PC-9 (cell line): ENCODE measurements at regions of chr7 and their contacts with region 1.

Region 1: DNA sequence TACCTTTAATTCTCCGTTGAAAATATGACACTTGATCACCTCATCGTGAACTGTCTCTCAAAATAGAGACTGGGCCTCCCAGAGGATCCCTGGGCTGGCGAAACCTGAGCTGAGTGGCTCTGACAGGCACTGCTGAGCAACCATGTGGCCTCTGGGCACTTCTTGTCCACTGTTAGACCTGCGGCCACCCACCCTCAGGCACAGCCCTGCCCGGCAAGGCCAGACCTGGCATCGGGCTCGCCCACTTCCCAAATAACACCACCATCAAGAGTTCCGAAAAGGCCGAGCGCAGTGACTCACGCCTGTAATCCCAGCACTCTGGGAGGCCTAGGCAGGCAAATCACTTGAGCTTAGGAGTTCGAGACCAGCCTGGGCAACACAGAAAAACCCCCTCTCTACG is 82.5 kb downstream of the COBL start:
- DNase-seq: peak in 1 of 2 experiments; percentile 39
- H3K4me3 ChIP-seq: no peak overlapping the region
- H3K27ac ChIP-seq: no peak overlapping the region
- H3K4me1 ChIP-seq: no peaks in the 10 kb centered on the region
- H3K27me3 ChIP-seq: no peaks in the 10 kb centered on the region
- CTCF ChIP-seq: no peak

Region 2: GRCh38 chr7:51274001-51274400 is 39.9 kb after region 1 on chr7:
- CTCF ChIA-PET with region 1: no interaction called
- POLR2A ChIA-PET with region 1: no interaction called
- intact Hi-C with region 1: no loop called
- DNase-seq: no peak
- H3K4me3 ChIP-seq: no peak overlapping the region
- H3K27ac ChIP-seq: no peak overlapping the region
- H3K4me1 ChIP-seq: no peaks in the 10 kb centered on the region; the same call in 1 of the 2 replicates
- H3K27me3 ChIP-seq: no peaks in the 10 kb centered on the region
- CTCF ChIP-seq: no peak

Region 3: GRCh38 chr7:51366930-51367613 is 132.9 kb after region 1 on chr7:
- CTCF ChIA-PET with region 1: interaction called, 23 read pairs
- POLR2A ChIA-PET with region 1: no interaction called
- intact Hi-C with region 1: no loop called
- DNase-seq: peak; percentile 54 to 61
- H3K4me3 ChIP-seq: no peak overlapping the region
- H3K27ac ChIP-seq: no peak overlapping the region
- H3K4me1 ChIP-seq: peaks cover 7% of the 10 kb centered on the region
- H3K27me3 ChIP-seq: no peaks in the 10 kb centered on the region
- CTCF ChIP-seq: peak; percentile 96

Region 4: DNA sequence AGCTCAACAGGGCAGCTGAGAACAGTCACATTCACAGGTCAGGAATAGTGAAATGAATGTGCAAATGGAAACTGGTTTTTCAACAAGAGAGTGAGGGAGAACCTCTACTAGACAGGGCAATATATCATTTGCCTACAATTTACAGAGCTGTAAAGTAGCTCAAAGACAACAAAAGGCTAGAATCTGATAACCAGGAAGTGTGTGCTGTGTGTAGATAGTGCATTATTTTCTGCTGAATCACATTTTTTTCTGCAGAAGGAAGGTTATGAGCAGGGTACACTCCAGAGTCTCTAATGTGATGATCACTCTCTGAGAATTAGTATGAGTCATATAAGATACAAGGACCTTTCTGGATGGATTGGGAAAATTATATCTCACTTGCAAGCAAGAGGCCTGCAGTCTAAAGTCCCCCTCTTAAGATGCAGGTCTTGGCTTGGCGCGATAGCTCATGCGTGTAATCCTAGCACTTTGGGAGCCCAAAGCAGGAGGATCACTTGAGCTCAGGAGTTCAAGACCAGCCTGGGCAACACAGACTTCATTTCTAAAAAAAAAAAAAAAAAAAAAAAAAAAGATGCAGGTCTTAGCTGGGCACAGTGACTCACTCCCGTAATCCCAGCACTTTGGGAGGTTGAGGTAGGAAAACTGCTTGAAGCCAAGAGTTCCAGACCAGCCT is 142.4 kb after region 1 on chr7:
- CTCF ChIA-PET with region 1: no interaction called
- POLR2A ChIA-PET with region 1: interaction called, 26 read pairs
- intact Hi-C with region 1: no loop called
- DNase-seq: peak; percentile 59 to 100
- H3K4me3 ChIP-seq: no peak overlapping the region
- H3K27ac ChIP-seq: peak overlapping the region; percentile 80
- H3K4me1 ChIP-seq: peaks cover 21% of the 10 kb centered on the region
- H3K27me3 ChIP-seq: no peaks in the 10 kb centered on the region
- CTCF ChIP-seq: no peak